MCF 10A (cell line): ENCODE measurements at regions of chr6 and their contacts with region 1.

Region 1: DNA sequence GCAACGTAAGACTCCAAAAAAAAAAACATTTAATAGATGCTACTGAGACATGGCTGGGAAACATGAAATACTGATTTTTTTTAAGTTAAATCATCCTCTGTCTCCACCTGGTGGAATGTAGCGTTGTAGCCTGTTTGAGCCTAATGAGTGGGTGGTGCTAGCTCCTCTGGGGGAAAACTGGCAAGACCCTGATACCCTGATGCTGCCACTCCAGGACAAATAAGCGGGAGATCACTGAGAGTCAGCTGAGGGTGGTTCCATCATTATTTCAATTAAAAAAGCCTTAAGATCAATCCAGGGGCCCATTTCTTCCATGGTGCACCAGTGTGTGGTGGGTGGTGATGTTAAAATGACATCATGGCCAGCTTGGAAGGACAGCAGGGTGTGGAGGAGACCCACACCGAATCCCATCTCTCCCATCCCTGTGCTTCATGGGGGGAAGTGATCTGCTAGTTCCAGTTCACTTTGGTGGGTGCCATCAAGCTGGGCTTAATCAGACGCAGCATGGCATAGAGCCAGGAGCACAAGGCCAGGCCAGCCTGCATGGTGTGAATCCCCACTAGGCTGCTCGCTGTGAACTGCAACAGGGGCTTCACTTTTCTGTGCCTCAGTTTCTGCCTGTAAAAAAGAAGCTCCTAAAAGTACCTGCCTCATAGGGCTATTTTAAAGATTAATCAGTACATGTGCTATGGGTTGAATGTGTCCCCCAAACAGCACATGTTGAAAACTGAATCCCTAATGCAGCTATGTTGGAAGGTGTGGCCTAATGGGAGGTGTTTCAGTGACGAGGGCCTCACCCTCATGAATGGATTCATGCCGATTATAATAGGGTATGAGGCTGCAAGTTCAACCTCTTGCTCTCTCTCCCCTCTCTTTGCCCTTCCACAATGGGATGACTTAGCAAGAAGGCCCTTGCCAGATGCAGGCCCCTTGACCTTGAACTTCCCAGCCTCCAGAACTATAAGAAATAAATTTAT is 13.0 kb upstream of the MRPS10 start:
- DNase-seq: peak; percentile 36
- H3K4me3 Mint-ChIP-seq: no peak overlapping the region
- H3K27ac Mint-ChIP-seq: peak overlapping the region; percentile 13
- H3K4me1 Mint-ChIP-seq: peaks cover 39% of the 10 kb centered on the region
- H3K27me3 Mint-ChIP-seq: no peaks in the 10 kb centered on the region
- CTCF ChIP-seq: peak; percentile 43

Region 2: DNA sequence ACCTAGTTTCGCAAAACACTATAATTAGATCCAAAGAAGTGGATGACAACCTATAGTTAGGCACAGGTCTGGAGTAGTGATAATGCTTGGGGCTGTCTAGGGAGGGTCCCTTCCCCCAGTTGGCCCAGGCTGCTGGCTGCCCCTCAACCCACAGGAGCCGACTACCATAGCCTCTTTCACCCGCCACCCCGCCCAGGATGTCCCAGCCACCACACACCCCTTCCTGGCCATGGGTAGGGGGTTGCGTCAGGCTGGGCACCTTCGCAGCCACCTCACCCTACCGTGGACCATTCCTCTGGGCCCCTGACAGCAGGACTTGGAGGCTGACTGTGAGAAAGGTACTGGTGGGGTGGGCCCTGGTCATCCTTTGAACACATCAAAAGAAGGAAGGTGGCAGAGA is 503.8 kb before region 1 on chr6:
- CTCF ChIA-PET with region 1: no interaction called
- POLR2A ChIA-PET with region 1: no interaction called
- intact Hi-C with region 1: no loop called
- DNase-seq: no peak
- H3K4me3 Mint-ChIP-seq: no peak overlapping the region
- H3K27ac Mint-ChIP-seq: no peak overlapping the region
- H3K4me1 Mint-ChIP-seq: peaks cover 42% of the 10 kb centered on the region
- H3K27me3 Mint-ChIP-seq: no peaks in the 10 kb centered on the region
- CTCF ChIP-seq: no peak

Region 3: DNA sequence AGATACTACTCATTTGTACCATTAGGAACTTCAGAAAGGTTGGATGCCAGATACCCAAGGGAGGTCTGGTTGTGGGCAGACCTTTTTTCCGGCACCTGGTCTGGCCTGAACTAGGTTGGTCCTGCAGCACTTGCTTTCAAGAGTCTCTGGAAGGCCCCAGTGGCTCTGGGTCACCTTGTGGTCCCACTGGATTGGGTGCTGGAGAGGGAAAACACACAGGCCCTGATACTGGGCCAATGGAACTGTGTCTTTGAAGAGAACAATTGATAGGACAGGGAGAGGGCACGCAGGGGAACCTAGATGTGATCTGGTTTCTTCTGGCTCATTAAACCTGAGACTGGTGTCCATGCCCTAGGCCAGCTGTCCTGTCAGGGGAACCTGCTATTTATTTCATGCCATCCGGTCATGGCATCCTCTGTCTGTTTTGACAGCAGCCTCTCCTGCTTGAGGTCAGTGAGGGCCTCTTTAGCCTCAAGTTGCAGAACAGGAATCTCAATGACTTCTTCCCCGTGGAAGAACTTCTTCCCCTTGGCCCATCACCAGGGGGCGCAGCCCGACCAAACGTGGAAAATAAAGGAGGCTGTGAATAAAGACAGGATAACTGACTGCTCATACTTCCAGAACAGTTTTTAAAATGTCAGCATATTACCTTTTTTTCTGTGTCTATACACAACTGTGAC is 155.3 kb before region 1 on chr6:
- CTCF ChIA-PET with region 1: interaction called, 3 read pairs
- POLR2A ChIA-PET with region 1: no interaction called
- intact Hi-C with region 1: loop called (anchors 1 kb)
- DNase-seq: peak; percentile 69
- H3K4me3 Mint-ChIP-seq: no peak overlapping the region
- H3K27ac Mint-ChIP-seq: no peak overlapping the region
- H3K4me1 Mint-ChIP-seq: no peaks in the 10 kb centered on the region
- H3K27me3 Mint-ChIP-seq: no peaks in the 10 kb centered on the region
- CTCF ChIP-seq: peak; percentile 82

Region 4: GRCh38 chr6:42338663-42339218 is 108.1 kb after region 1 on chr6:
- CTCF ChIA-PET with region 1: interaction called, 3 read pairs
- POLR2A ChIA-PET with region 1: interaction called, 6 read pairs
- intact Hi-C with region 1: loop called (anchors 10 kb)
- DNase-seq: peak; percentile 97
- H3K4me3 Mint-ChIP-seq: peak overlapping the region; percentile 61
- H3K27ac Mint-ChIP-seq: peak overlapping the region; percentile 55
- H3K4me1 Mint-ChIP-seq: peaks cover 52% of the 10 kb centered on the region
- H3K27me3 Mint-ChIP-seq: no peaks in the 10 kb centered on the region
- CTCF ChIP-seq: no peak